ENCODE measurements at regions of chr11 and their contacts with region 1.

Region 1: GRCh38 chr11:66112601-66113098 is 42.6 kb downstream of the PACS1 start:
- DNase-seq: no peak
- ATAC-seq: no peak
- H3K4me3 Mint-ChIP-seq: peak overlapping the region; percentile 25
- H3K27ac Mint-ChIP-seq: peak overlapping the region; percentile 73
- H3K4me1 Mint-ChIP-seq: peaks cover 78% of the 10 kb centered on the region
- H3K27me3 Mint-ChIP-seq: no peaks in the 10 kb centered on the region

Region 2: GRCh38 chr11:66051766-66052663 is 60.6 kb before region 1 on chr11 and contains the start of gene SF3B2:
- POLR2A ChIA-PET with region 1: interaction called, 14 read pairs
- DNase-seq: peak; percentile 96
- ATAC-seq: peak; percentile 99
- H3K4me3 Mint-ChIP-seq: peak within 1 kb of the TSS; percentile 99
- H3K27ac Mint-ChIP-seq: peak within 1 kb of the TSS; percentile 92
- H3K4me1 Mint-ChIP-seq: peaks cover 28% of the 10 kb centered on the region
- H3K27me3 Mint-ChIP-seq: peaks cover 10% of the 10 kb centered on the region
- total RNA-seq, gene SF3B2: 231 to 246 TPM

Region 3: DNA sequence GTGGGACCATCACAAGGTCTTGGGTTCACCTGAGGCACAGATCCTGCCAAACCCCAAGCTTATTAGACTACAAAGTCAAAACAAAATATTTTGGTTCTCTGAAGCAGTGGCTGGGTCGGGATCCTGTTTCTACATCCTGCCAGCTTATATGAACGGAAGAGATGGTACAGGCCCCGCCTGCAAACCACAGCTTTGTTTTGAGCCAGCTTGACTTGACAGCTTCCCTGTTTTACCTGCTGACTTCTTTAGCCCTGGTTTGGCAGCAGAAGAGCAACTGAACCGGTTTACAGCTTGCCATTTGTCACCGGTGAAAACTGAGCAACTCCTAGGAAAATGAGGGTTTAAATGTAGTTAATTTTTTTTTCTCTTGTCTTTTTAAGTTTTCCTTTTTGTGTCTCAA is 31.1 kb before region 1 on chr11:
- POLR2A ChIA-PET with region 1: interaction called, 16 read pairs
- DNase-seq: peak; percentile 63
- ATAC-seq: peak; percentile 97
- H3K4me3 Mint-ChIP-seq: peak overlapping the region; percentile 91
- H3K27ac Mint-ChIP-seq: peak overlapping the region; percentile 99
- H3K4me1 Mint-ChIP-seq: peaks cover 57% of the 10 kb centered on the region
- H3K27me3 Mint-ChIP-seq: no peaks in the 10 kb centered on the region

Region 4: DNA sequence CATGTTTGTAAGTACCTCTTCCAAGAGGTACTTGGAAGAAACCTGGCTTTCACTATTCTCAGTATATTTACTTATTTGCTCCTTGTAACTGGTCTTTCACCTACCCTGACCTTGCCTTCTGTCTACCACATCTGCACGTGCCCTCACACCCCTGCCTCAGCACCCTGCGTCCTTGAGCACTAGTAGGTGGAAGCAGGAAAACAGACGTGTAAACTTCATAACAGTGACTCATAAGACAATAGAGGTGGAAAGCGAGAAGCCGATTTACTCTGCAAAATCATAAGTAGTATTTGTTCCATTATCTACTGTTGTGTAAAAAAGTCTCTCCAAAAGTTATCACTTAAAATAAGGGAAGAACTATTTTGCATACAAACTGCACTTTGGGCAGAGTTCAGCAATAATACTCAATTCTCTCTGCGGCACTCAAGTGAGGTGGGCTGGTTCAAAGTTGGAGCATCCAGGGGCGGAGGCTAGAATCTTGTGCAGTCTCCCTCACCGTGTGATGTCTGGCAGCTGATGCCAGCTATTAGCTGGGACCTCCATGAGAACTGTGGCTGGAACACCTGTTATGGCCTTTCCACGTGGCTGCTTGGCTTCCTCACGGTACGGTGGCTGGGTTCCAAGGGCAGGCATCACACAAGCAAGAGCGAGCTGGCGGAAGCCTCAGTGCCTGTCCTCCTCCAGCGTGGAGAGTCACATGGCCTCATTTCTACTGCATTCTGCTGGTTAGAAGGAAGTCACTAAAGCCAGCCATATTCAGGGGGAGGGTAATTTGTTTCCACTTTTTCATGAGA is 12.2 kb before region 1 on chr11:
- POLR2A ChIA-PET with region 1: interaction called, 18 read pairs
- DNase-seq: peak; percentile 71
- ATAC-seq: peak; percentile 97
- H3K4me3 Mint-ChIP-seq: peak overlapping the region; percentile 76
- H3K27ac Mint-ChIP-seq: peak overlapping the region; percentile 86
- H3K4me1 Mint-ChIP-seq: peaks cover 41% of the 10 kb centered on the region
- H3K27me3 Mint-ChIP-seq: no peaks in the 10 kb centered on the region

Region 5: DNA sequence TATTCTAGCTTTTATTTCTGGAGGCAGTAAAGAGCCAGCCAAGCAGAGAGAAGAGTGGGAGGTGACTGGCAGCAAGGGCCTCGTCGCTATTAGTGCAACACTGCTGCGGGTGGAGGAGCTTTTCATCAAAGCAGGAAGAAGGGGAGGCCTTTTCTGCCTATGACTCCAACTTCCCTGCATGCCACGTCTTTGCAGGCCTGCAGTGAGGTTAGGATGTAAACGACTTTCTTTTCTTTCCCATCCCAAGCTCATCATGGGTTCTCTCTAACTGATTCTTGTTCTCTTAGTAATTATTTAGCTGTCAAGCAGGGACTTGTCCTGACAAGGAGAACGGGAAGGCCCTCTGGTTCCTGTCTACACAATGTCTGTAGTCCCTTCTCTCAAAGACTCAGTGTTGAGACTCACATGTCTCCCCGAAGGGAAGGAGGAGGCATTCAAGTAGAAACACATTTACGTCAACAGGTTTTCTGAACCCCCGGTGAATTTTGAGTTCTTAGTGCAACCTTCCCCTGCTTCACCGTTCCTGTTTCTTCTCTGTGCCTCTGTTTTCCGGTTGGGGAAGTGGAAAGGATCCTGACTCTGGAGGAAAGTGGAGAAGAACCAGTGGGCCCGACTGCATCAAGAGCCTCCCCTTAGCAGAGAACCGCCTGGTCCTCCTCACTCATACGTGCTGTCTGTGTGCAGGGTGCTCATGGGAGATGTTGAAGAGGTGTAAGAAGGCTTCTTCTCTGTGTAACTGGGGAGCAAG is 14.3 kb after region 1 on chr11:
- POLR2A ChIA-PET with region 1: interaction called, 13 read pairs
- DNase-seq: peak; percentile 47
- ATAC-seq: peak; percentile 92
- H3K4me3 Mint-ChIP-seq: peak overlapping the region; percentile 79
- H3K27ac Mint-ChIP-seq: peak overlapping the region; percentile 96
- H3K4me1 Mint-ChIP-seq: peaks cover 54% of the 10 kb centered on the region
- H3K27me3 Mint-ChIP-seq: no peaks in the 10 kb centered on the region

Region 6: GRCh38 chr11:66192181-66192863 is 79.7 kb after region 1 on chr11:
- POLR2A ChIA-PET with region 1: no interaction called
- DNase-seq: no peak
- ATAC-seq: no peak
- H3K4me3 Mint-ChIP-seq: no peak overlapping the region
- H3K27ac Mint-ChIP-seq: no peak overlapping the region
- H3K4me1 Mint-ChIP-seq: peaks cover 3% of the 10 kb centered on the region
- H3K27me3 Mint-ChIP-seq: no peaks in the 10 kb centered on the region